ENCODE measurements at regions of chr1 and their contacts with region 1.

Region 1: GRCh38 chr1:202926720-202927491 is at the start of gene KLHL12:
- DNase-seq: peak; percentile 95 to 97
- H3K4me3 ChIP-seq: peak within 1 kb of the TSS; percentile 78 to 99
- H3K27ac ChIP-seq: peak within 1 kb of the TSS; percentile 93 to 96
- H3K4me1 ChIP-seq: peaks cover 0 to 26% (median 5%) of the 10 kb centered on the region in 4 donors
- H3K27me3 ChIP-seq: no peaks in the 10 kb centered on the region
- CTCF ChIP-seq: peak; percentile 55 to 61

Region 2: DNA sequence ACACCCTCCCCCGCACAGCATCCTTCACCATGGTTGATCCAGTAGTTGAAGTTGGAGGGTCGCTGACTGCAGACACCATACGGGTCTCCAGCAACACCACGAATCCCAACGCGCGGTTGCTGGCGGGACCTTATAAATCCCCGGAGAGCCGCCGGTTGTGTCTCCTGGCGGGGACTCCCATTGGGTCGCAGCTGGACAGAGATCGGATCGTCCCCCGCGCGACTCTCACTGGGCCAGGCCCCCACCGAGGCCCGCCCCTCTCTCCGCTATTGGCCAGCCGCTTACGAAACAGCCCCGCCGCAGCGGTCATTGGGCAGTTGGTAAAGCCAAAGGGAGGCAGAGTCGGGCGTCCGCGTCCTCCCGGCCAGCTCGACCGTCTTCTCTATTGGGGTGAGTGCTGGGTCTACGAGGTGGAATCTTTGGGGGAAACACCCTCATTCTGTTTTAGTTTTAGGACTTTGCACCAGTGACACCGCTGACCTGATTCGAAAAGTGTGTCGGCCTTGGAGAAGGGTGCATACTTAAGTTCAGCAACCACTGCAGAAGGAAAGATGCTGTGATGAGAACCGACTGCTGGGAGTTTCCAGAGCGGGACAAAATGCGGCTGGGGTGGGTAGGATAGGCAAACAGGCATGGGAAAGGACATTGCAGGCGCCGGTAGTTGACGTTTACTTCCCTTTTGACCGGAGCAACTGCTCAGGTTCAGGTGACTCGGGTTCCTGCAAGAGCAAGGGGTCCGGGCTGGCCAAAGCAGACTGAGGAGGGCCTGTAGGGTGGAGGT is 65.3 kb before region 1 on chr1:
- intact Hi-C with region 1: no loop called
- DNase-seq: peak; percentile 94 to 95
- H3K4me3 ChIP-seq: peak overlapping the region; percentile 56 to 87
- H3K27ac ChIP-seq: peak overlapping the region in 1 of 2 donors; percentile 34
- H3K4me1 ChIP-seq: peaks cover 0 to 11% (median 7%) of the 10 kb centered on the region in 4 donors
- H3K27me3 ChIP-seq: no peaks in the 10 kb centered on the region
- CTCF ChIP-seq: no peak

Region 3: GRCh38 chr1:202998836-202999750 is 72.2 kb after region 1 on chr1:
- intact Hi-C with region 1: loop called (anchors 10 kb)
- DNase-seq: peak in 1 of 2 donors; percentile 45
- H3K4me3 ChIP-seq: no peak overlapping the region
- H3K27ac ChIP-seq: no peak overlapping the region
- H3K4me1 ChIP-seq: no peaks in the 10 kb centered on the region
- H3K27me3 ChIP-seq: peaks cover 0 to 23% of the 10 kb centered on the region in 2 donors
- CTCF ChIP-seq: peak; percentile 58 to 71